ENCODE measurements at regions of chr20 and their contacts with region 1.

Region 1: GRCh38 chr20:22691369-22692118 is 107.2 kb upstream of the FOXA2 start:
- DNase-seq: peak in 4 of 5 donors; percentile 17 to 41 (median 24)
- H3K4me3 ChIP-seq: no peak overlapping the region
- H3K4me3 Mint-ChIP-seq: no peak overlapping the region
- H3K27ac ChIP-seq: no peak overlapping the region
- H3K27ac Mint-ChIP-seq: no peak overlapping the region
- H3K4me1 ChIP-seq: no peaks in the 10 kb centered on the region
- H3K4me1 Mint-ChIP-seq: no peaks in the 10 kb centered on the region
- H3K27me3 ChIP-seq: no peaks in the 10 kb centered on the region
- H3K27me3 Mint-ChIP-seq: peaks cover 0 to 3% of the 10 kb centered on the region in 2 donors

Region 2: DNA sequence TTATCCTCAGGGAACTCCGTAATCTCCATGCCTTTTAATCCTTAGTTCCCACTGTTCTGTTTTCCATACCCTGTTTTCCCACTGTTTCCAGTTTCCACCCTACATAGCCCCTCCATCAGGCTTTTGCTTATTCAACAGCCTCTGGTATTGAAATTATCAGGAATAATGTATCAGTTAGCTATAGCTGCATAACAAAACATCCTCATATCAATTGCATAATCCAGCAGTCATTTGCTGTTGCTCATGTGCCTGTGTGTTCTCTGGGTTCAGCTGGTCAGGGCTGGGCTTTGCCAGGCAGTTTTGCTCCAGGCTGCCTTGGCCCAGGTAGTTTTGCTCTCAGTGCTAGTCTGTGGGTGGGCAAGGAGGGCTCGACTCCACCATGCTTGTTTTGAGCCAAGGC is 12.9 kb before region 1 on chr20:
- CTCF ChIA-PET with region 1: interaction called, 12 read pairs
- POLR2A ChIA-PET with region 1: no interaction called
- intact Hi-C with region 1: no loop called
- DNase-seq: no peak
- H3K4me3 ChIP-seq: no peak overlapping the region
- H3K4me3 Mint-ChIP-seq: no peak overlapping the region
- H3K27ac ChIP-seq: no peak overlapping the region
- H3K27ac Mint-ChIP-seq: no peak overlapping the region
- H3K4me1 ChIP-seq: no peaks in the 10 kb centered on the region
- H3K4me1 Mint-ChIP-seq: no peaks in the 10 kb centered on the region
- H3K27me3 ChIP-seq: no peaks in the 10 kb centered on the region
- H3K27me3 Mint-ChIP-seq: no peaks in the 10 kb centered on the region

Region 3: DNA sequence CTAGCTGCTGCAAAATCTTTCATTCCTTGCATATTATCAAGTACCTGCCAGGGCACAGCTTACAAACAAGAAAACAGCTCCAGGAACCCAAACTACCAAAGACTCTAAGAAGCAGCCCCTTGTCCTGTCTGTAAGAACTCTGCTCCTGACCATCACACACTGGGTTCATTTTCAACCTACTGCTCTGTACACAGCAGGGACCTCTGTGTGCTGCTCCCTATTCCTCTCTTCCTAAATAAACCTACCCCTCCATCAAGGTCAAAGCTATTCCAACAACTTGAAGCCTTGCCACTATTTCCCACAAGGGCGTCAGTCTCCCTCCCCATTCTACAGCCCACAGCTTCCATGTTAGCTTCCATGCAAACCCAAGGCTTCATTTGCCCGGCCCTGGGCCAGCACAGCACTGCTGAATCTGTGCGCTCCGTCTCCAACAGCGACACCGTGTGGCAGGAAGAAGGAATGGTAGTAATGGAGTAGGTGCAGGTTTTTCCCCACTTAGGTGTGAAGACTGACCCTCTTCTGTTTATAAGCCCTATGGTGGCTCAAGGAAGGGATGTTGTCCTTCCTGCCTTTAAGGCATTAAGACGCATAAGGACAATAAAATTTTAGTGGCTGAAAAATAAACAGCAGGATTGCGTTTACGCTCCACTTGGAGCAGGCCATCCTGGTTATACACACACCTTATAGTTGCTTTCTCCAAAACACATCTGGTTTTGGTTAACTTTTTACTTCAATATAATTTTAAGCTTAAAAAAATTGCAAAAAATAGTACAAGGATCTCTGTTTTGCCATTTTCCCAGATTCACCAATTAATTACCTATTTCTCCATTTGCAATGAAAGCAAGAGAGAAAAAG is 543.9 kb after region 1 on chr20:
- CTCF ChIA-PET with region 1: interaction called, 14 read pairs
- POLR2A ChIA-PET with region 1: no interaction called
- intact Hi-C with region 1: no loop called
- DNase-seq: peak in 3 of 5 donors; percentile 14 to 18 (median 14)
- H3K4me3 ChIP-seq: no peak overlapping the region
- H3K4me3 Mint-ChIP-seq: no peak overlapping the region
- H3K27ac ChIP-seq: no peak overlapping the region
- H3K27ac Mint-ChIP-seq: no peak overlapping the region
- H3K4me1 ChIP-seq: no peaks in the 10 kb centered on the region
- H3K4me1 Mint-ChIP-seq: no peaks in the 10 kb centered on the region
- H3K27me3 ChIP-seq: no peaks in the 10 kb centered on the region
- H3K27me3 Mint-ChIP-seq: peaks cover 0 to 3% of the 10 kb centered on the region in 2 donors

Region 4: DNA sequence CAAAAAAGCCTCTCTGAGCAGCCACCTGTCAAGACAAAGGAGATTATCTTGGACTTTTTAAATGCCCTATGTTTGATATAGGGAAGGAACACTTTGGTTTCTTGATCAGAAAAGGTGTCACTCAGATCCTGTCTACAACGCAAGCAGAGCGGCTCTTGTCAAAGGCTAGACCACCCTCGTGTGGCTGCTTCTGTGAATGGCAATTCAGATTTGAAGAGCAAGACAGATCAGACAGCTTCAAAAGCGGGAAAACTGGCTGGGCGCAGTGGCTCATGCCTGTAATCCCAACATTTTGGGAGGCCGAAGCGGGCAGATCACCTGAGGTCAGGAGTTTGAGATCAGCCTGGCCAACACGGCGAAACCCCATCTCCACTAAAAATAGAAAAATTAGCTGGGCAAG is 649.0 kb after region 1 on chr20:
- CTCF ChIA-PET with region 1: interaction called, 11 read pairs
- POLR2A ChIA-PET with region 1: no interaction called
- intact Hi-C with region 1: no loop called
- DNase-seq: peak in 1 of 5 donors; percentile 13
- H3K4me3 ChIP-seq: no peak overlapping the region
- H3K4me3 Mint-ChIP-seq: no peak overlapping the region
- H3K27ac ChIP-seq: no peak overlapping the region
- H3K27ac Mint-ChIP-seq: no peak overlapping the region
- H3K4me1 ChIP-seq: no peaks in the 10 kb centered on the region
- H3K4me1 Mint-ChIP-seq: no peaks in the 10 kb centered on the region
- H3K27me3 ChIP-seq: no peaks in the 10 kb centered on the region
- H3K27me3 Mint-ChIP-seq: peaks cover 0 to 2% of the 10 kb centered on the region in 2 donors

Measured in CD4-positive, alpha-beta memory T cell (primary cell).